Activated T-helper 1 cell treated with anti-CD3 and anti-CD28 coated beads, Interleukin-12 subunit alpha, Interleukin-12 subunit beta, Interleukin-2, Interleukin-4 antibody, amounts not matched to agents 30 ng/mL and 10 ng/mL and 1 ng/mL, durations not matched to agents 14 hours and 24 hours and 36 hours (primary cell): ENCODE measurements at regions of chrX and their contacts with region 1.

Region 1: GRCh38 chrX:572537-573124 is 58.0 kb upstream of the SHOX start:
- DNase-seq: no peak
- H3K4me3 Mint-ChIP-seq: no peak overlapping the region
- H3K27ac Mint-ChIP-seq: peak overlapping the region; percentile 20
- H3K4me1 Mint-ChIP-seq: no peaks in the 10 kb centered on the region
- H3K27me3 Mint-ChIP-seq: no peaks in the 10 kb centered on the region

Region 2: DNA sequence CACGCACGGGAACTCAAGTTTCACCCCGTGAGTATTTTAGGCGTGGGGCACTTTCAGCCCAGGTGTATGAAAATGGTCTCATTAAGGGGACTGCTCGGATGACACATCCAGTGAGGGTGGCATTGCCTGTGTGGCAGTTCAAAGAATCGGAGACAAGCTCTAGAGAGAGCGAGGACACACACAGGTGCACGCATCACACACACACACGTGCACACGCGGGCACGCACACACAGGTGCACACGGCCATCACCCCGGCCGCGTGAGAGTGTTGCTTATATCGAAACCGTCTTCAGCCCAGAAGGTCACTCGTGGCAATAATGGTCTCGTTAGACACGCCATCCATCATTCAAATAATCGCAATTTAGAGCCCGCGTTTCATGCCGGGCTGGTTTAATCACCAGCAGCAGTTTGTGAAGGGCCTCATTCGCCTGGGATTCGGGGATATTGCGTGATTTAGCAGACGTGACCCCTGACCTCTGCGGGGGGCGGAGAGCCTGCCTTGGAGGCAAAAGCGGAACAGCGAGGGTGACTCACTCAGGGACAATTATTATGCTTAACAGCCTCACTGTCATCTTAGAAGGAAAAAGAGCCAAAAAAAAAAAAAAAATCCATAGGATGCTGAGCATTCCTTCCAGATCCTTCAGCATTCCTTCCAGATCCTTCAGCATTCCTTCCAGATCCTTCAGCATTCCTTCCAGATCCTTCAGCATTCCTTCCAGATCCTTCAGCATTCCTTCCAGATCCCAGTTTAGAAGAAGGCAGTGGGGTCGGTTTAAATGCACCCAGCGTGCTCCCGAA is 96.5 kb before region 1 on chrX:
- intact Hi-C with region 1: loop called (anchors 10 kb)
- DNase-seq: no peak
- H3K4me3 Mint-ChIP-seq: no peak overlapping the region
- H3K27ac Mint-ChIP-seq: no peak overlapping the region
- H3K4me1 Mint-ChIP-seq: no peaks in the 10 kb centered on the region
- H3K27me3 Mint-ChIP-seq: no peaks in the 10 kb centered on the region

Region 3: DNA sequence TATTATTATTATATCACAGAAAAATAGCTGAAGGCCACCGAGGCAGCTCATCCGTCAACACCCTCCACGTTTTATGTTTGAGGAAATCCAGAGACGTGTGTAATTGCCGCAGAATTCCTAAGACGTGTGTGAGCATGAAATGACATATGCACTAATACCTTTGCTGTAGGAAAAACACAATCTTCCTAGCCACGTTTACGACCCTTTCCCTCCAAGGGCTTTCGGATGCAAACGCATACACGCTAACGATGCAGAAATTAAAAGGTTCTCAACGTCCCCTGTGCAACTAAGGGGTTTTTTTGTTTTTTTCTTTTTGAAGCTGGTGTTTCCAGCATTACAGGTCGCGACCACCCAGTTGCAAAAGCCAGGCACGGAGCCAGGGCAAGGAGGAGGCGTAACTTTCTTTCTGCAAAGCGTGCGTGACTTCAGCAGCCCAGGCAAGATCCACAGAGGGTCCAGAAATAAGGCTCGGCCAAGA is 606.0 kb after region 1 on chrX:
- intact Hi-C with region 1: loop called (anchors 5 kb)
- DNase-seq: no peak
- H3K4me3 Mint-ChIP-seq: no peak overlapping the region
- H3K27ac Mint-ChIP-seq: no peak overlapping the region
- H3K4me1 Mint-ChIP-seq: no peaks in the 10 kb centered on the region
- H3K27me3 Mint-ChIP-seq: no peaks in the 10 kb centered on the region

Region 4: DNA sequence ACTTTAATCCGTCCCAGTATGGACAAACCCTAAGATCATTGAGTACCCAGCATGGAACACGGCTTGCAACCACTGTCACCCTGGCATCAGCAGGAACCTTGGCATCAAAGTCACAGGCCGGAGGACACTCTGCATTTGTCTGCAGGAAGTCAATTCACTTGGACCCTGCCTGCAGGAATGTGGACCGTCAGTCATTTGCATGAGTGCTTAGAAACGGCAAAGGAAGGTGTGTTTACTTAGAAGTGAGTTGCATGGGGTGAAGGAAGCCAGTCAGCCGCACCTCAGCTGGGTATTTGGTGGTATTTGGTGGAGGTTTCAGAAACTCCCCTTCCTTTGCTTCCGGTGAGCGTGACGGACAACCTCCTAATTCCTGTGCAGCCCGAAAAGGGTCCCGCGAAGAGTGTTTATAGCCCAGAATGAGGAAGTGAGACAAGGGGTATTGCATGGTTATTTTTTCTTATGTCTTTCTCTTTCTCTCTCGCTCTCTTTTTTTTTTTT is 948.9 kb after region 1 on chrX:
- intact Hi-C with region 1: loop called (anchors 10 kb)
- DNase-seq: peak; percentile 66
- H3K4me3 Mint-ChIP-seq: peak overlapping the region; percentile 71
- H3K27ac Mint-ChIP-seq: peak overlapping the region; percentile 81
- H3K4me1 Mint-ChIP-seq: peaks cover 55% of the 10 kb centered on the region
- H3K27me3 Mint-ChIP-seq: no peaks in the 10 kb centered on the region